K562 (cell line): ENCODE measurements at regions of chr5 and their contacts with region 1.

Region 1: DNA sequence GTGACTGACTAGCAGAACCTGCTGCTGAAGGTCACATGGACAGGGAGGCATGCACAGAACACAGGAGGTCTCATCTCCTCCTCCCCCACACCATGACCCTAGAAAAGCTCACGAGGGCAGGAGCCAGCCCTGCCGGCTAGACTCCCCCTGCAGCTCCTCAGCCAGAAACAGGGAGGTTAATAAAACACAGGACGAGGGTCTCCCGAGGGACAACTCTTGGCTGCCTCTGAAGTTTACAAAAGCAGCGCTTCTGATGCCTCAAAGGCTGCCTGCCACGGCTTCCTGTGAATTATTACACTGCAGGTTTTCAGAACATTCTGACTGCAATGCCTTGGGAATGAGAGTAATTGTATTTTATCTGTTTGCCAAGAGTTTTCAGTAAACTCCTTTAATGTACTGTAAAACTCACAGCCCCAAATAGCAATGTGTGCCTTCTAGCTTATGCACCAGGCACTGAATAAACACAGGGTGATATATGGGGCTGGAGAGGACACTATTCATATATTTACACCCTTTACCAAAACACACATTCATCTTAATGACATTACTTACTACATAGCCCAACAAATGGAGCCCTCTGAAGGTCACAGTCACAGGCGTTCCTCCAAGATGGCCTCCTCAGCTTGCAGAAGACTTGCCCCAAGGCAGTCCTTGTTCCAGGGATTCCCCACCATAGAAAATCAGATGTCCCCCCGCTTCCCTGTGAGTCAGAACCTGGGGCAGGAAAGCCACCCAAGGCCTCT is 83.7 kb downstream of the C5orf15 start:
- DNase-seq: no peak
- ATAC-seq: no peak
- H3K4me3 ChIP-seq: no peak overlapping the region
- H3K27ac ChIP-seq: no peak overlapping the region
- H3K4me1 ChIP-seq: peaks cover 10% of the 10 kb centered on the region in 2 experiments; a peak in 3 of 5 replicates
- H3K27me3 ChIP-seq: peaks cover 2 to 18% of the 10 kb centered on the region in 2 experiments; a peak in 4 of 5 replicates
- CTCF ChIP-seq: no peak
- EP300 ChIP-seq: no peak
- POLR2A ChIP-seq: no peak
- RAD21 ChIP-seq: no peak

Region 2: DNA sequence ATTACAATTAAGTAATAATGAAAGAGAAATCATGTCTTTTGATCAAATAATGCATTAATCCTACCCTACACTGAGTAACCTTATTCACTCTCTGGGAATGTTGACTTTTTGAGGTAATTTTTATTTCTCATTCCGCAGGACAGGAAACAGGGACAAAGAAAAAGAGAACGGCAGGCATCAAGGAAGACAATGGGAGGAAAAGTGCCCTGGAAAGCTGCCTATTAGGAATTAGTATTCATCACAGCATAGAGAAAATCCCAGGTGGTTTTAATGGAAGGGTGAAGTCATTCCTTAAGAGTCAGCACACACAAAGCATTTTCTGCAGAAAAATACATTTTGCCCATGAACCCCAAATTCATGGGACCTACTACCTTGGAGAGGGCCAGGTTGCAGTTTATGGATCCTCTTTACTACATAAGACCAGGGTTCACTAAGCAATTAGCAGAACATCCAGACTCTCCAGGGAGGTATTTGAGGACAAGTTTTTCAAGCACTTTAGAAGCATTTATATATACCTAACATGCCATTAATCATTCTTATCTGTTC is 281.8 kb before region 1 on chr5:
- CTCF ChIA-PET with region 1: no interaction called
- POLR2A ChIA-PET with region 1: no interaction called
- in situ Hi-C with region 1: no loop called
- intact Hi-C with region 1: no loop called
- DNase-seq: no peak
- ATAC-seq: no peak
- H3K4me3 ChIP-seq: no peak overlapping the region
- H3K27ac ChIP-seq: no peak overlapping the region
- H3K4me1 ChIP-seq: no peaks in the 10 kb centered on the region
- H3K27me3 ChIP-seq: peaks cover 0 to 28% of the 10 kb centered on the region in 2 experiments; a peak in 4 of 5 replicates
- CTCF ChIP-seq: no peak
- EP300 ChIP-seq: no peak
- POLR2A ChIP-seq: no peak
- RAD21 ChIP-seq: no peak

Region 3: DNA sequence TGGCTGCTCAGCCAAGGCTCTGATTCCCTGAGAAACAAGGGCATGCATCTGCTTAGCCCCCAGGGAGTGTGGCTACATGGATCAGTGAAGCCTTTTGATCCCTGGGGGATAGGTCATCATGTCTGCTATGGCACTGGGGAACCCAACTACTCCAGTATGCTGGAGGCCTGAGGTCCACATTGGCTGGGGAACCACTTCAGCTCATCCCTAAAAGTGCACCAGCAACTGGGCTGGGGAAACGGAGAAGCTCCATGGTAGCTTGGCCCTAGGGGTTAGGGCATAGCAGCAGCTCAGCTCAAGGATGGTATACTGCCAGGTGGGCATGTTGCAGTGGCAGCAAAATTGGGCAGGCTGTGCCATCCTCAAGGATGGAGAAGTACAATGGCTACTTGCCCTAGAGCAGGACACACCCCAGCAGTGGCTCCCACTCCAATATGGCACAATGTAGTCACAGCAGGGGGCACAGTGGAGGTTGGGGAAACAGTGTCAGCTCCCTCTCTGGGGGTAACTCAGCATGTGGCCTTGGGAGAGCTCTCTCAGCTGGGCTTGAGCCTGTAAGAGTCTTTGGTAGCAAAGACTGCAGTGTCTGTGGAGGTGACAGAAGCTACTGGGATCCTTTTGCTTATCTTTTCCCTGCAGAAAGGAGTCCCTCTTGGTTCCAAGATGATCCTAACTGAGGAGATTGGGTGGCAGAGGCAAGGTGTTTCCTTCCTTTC is 160.9 kb before region 1 on chr5:
- CTCF ChIA-PET with region 1: no interaction called
- POLR2A ChIA-PET with region 1: no interaction called
- in situ Hi-C with region 1: no loop called
- intact Hi-C with region 1: no loop called
- DNase-seq: no peak
- ATAC-seq: no peak
- H3K4me3 ChIP-seq: no peak overlapping the region
- H3K27ac ChIP-seq: no peak overlapping the region
- H3K4me1 ChIP-seq: no peaks in the 10 kb centered on the region
- H3K27me3 ChIP-seq: peaks cover 0 to 5% of the 10 kb centered on the region in 2 experiments; a peak in 1 of 5 replicates
- CTCF ChIP-seq: no peak
- EP300 ChIP-seq: no peak
- POLR2A ChIP-seq: no peak
- RAD21 ChIP-seq: no peak

Region 4: DNA sequence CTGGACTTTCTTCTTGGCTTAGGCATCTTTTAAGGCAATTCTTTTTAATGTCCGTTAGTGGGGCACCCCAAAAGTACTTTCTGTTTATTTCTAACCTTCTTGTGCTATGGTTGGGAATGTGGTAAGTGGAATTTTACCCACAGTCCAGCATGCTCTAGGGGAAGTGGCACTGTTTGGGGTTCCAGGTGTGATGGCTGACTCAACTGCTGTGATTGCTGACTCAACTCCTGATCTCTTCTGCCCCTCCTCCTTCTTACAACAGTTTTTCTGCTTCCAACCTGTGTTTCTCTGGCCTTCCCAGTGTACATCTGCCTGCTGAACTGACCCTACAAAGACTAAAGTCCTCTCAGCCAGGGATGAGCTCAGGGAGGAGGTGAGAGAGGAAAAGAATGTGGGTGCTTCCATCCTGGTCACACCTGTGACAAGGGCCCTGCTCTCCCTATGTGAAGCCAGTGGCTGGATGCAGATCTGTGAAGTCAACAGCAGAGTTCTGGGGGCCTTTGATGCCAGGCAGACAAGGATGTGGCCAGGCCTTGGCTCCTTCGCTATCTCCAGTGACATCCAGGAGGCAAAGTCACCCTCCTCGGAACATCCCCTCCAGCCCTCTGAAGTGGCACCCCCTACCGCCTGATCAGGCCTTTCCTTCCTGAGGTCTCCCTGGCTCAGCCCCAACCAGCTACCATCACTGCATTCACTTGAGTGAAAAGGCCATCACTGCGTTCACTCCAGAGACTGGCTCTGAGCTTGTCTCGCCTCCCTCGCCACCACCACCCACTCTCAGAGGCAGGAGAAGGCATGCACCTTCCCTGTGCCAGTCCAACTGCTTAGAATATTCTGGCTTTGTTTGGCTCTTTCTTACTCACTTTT is 11.5 kb after region 1 on chr5:
- CTCF ChIA-PET with region 1: no interaction called
- POLR2A ChIA-PET with region 1: interaction called, 15 read pairs
- in situ Hi-C with region 1: no loop called
- intact Hi-C with region 1: no loop called
- DNase-seq: no peak
- ATAC-seq: no peak
- H3K4me3 ChIP-seq: no peak overlapping the region
- H3K27ac ChIP-seq: no peak overlapping the region
- H3K4me1 ChIP-seq: peaks cover 2 to 13% of the 10 kb centered on the region in 2 experiments; a peak in 4 of 5 replicates
- H3K27me3 ChIP-seq: peaks cover 7 to 22% of the 10 kb centered on the region in 2 experiments; a peak in 3 of 5 replicates
- CTCF ChIP-seq: no peak
- EP300 ChIP-seq: no peak
- POLR2A ChIP-seq: no peak
- RAD21 ChIP-seq: no peak

Region 5: GRCh38 chr5:133926489-133927299 is 42.0 kb after region 1 on chr5:
- CTCF ChIA-PET with region 1: no interaction called
- POLR2A ChIA-PET with region 1: no interaction called
- in situ Hi-C with region 1: no loop called
- intact Hi-C with region 1: no loop called
- DNase-seq: no peak
- ATAC-seq: no peak
- H3K4me3 ChIP-seq: no peak overlapping the region
- H3K27ac ChIP-seq: no peak overlapping the region
- H3K4me1 ChIP-seq: peaks cover 30 to 34% of the 10 kb centered on the region in 2 experiments
- H3K27me3 ChIP-seq: no peaks in the 10 kb centered on the region
- CTCF ChIP-seq: no peak
- EP300 ChIP-seq: no peak
- POLR2A ChIP-seq: no peak
- RAD21 ChIP-seq: no peak

Region 6: GRCh38 chr5:134018154-134018985 is 133.6 kb after region 1 on chr5:
- CTCF ChIA-PET with region 1: no interaction called
- POLR2A ChIA-PET with region 1: no interaction called
- in situ Hi-C with region 1: no loop called
- intact Hi-C with region 1: no loop called
- DNase-seq: peak in 2 of 4 experiments; percentile 38 to 42
- ATAC-seq: peak; percentile 59
- H3K4me3 ChIP-seq: no peak overlapping the region
- H3K27ac ChIP-seq: no peak overlapping the region
- H3K4me1 ChIP-seq: peaks cover 0 to 4% of the 10 kb centered on the region in 2 experiments; a peak in 3 of 5 replicates
- H3K27me3 ChIP-seq: peaks cover 24 to 45% of the 10 kb centered on the region in 2 experiments; a peak in 4 of 5 replicates
- CTCF ChIP-seq: no peak
- EP300 ChIP-seq: peak; percentile 28; the same call in 1 of the 2 replicates
- POLR2A ChIP-seq: no peak
- RAD21 ChIP-seq: no peak